ENCODE measurements at regions of chr2 and their contacts with region 1.

Region 1: GRCh38 chr2:34096562-34097171 is 497.6 kb upstream of the FAM98A start:
- DNase-seq: peak; percentile 16 to 43
- H3K4me3 ChIP-seq: no peak overlapping the region
- H3K27ac ChIP-seq: no peak overlapping the region
- H3K4me1 ChIP-seq: no peaks in the 10 kb centered on the region
- H3K27me3 ChIP-seq: no peaks in the 10 kb centered on the region
- CTCF ChIP-seq: peak; percentile 89

Region 2: GRCh38 chr2:34632327-34632726 is 535.7 kb after region 1 on chr2:
- CTCF ChIA-PET with region 1: no interaction called
- POLR2A ChIA-PET with region 1: no interaction called
- intact Hi-C with region 1: no loop called
- DNase-seq: no peak
- H3K4me3 ChIP-seq: no peak overlapping the region
- H3K27ac ChIP-seq: no peak overlapping the region
- H3K4me1 ChIP-seq: no peaks in the 10 kb centered on the region
- H3K27me3 ChIP-seq: no peaks in the 10 kb centered on the region
- CTCF ChIP-seq: no peak

Region 3: GRCh38 chr2:35410431-35411061 is 1313.9 kb after region 1 on chr2:
- CTCF ChIA-PET with region 1: no interaction called
- POLR2A ChIA-PET with region 1: no interaction called
- intact Hi-C with region 1: loop called (anchors 2 kb)
- DNase-seq: peak in 1 of 2 experiments; percentile 16
- H3K4me3 ChIP-seq: no peak overlapping the region
- H3K27ac ChIP-seq: no peak overlapping the region
- H3K4me1 ChIP-seq: no peaks in the 10 kb centered on the region
- H3K27me3 ChIP-seq: no peaks in the 10 kb centered on the region
- CTCF ChIP-seq: peak; percentile 97